ENCODE measurements at regions of chr19 and their contacts with region 1.

Region 1: GRCh38 chr19:31214086-31214485 is 135.2 kb downstream of the TSHZ3 start:
- DNase-seq: peak; percentile 87

Region 2: GRCh38 chr19:31312009-31312676 is 98.1 kb after region 1 on chr19:
- intact Hi-C with region 1: loop called (anchors 10 kb)
- DNase-seq: no peak

Measured in cardiac septum (tissue), 1 donor.